Left cardiac atrium (tissue), 4 donors: ENCODE measurements at regions of chr1 and their contacts with region 1.

Region 1: DNA sequence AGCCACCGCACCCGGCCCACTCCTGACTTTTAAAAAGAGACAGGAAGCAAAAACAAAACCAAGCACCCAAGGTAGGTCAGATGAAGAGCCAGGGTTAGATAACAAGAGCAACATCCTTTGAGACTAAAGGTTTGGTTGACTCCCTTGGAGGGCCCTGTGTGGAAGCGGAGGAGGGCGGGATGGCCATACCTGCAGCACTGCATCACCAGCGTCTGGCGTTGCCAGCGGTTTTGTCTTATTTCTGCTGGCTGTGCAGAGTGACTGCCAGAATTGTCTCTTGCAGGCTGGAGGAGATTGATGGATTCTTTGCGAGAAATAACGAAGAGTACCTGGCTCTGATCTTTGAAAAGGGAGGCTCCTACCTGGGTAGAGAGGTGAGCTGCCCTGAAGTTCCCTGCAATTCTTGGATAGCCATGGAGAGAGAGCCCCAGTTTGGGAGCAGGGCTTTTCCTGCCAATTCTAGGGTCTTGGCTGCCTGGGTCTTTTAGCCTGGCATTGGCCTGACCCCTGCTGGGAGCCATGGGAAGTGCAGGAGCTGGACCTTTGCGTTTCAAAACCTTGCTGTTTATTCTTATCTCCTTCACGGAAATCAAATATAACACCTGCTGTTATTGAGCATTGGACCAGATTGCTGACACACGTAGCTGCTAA is 24.0 kb downstream of the QSOX1 start:
- DNase-seq: peak; percentile 64
- ATAC-seq: peak in 1 of 2 donors; percentile 11

Region 2: GRCh38 chr1:180092931-180093559 is 85.6 kb before region 1 on chr1:
- intact Hi-C with region 1: loop called in 1 of 2 experiments (anchors 5 kb)
- DNase-seq: no peak
- ATAC-seq: no peak

Region 3: GRCh38 chr1:180101411-180101810 is 77.2 kb before region 1 on chr1:
- intact Hi-C with region 1: loop called (anchors 5 kb)
- DNase-seq: no peak
- ATAC-seq: no peak

Region 4: DNA sequence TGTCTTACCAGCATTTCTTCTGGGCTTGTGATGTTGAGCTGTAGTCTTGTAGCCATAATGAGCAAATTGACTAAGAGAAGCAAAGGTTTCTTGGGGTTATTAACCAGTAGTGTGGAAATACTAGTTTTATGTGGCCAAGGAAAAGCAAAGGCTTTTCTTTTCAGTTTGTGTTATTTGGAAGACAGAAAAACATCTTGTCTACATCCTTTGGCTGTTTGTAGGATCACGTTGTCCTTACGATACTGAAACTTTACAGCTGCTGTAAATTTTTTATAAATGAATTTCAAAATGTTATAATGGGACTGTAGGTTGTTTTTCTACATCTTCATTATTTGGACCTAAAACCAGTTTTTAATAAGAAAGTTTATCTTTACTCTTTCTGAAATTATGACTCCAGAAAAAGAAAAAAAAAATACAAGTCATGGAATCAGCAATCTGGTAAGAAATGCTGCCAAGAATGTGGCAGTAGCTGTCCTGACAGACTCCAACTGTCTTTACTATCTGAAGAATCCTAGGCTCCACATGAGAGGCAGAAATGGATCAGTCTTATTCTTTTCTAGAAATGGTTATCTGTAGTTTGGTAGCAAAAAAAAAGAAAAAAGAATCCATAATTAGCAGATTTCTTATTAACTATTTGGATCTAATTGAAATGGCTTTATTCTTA is 65.5 kb before region 1 on chr1:
- intact Hi-C with region 1: loop called in 1 of 2 experiments (anchors 5 kb)
- DNase-seq: no peak
- ATAC-seq: peak; percentile 37 to 53

Region 5: DNA sequence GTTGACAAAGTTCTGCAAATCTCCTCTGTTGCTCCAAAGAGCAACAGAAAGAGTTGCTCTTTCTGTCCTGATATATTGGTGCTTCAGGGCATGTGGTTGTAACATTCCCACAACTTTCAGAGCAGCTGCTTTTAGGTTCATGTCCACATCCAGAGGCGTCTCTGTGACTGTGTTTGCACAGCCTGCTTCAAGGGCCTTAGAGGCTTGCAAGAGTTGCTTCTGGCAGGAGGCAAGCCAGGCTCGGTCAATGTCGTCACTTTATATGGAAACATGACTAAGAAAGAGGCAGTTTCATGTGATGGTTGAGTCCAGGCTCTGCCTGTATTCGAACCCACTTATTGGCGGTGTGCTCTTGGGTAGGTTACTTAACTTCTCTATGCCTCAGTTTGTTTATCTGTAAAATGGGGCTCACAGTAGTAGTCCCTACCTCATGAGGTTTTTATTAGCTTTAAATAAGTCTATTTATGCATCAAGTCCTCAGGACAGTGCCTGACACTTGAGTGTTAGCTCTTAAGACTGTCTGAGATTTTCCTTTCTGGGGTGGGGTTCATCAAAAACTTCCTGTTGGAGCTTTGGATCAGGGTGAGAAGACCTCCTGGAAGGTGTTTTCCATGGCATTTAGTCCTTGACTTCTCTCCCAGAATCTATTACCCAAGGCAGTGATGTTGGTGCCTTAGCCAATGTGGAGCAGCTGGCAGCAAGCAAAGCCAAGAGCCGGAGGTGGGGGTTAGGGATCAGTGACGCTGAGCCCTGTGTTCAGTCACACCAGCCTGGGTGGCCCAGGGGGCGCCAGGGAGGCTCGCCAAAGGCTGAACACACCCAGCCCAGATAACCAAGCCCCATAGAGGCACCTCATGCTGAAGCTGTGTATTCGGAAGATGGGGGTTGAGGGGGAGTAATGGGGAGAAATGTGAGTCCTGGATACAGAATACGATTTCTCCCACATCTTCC is 70.4 kb after region 1 on chr1:
- intact Hi-C with region 1: no loop called
- DNase-seq: no peak
- ATAC-seq: peak in 1 of 2 donors; percentile 28